Activated CD8-positive, alpha-beta T cell treated with anti-CD3 and anti-CD28 coated beads for 36 hours (primary cell): ENCODE measurements at regions of chr19 and their contacts with region 1.

Region 1: DNA sequence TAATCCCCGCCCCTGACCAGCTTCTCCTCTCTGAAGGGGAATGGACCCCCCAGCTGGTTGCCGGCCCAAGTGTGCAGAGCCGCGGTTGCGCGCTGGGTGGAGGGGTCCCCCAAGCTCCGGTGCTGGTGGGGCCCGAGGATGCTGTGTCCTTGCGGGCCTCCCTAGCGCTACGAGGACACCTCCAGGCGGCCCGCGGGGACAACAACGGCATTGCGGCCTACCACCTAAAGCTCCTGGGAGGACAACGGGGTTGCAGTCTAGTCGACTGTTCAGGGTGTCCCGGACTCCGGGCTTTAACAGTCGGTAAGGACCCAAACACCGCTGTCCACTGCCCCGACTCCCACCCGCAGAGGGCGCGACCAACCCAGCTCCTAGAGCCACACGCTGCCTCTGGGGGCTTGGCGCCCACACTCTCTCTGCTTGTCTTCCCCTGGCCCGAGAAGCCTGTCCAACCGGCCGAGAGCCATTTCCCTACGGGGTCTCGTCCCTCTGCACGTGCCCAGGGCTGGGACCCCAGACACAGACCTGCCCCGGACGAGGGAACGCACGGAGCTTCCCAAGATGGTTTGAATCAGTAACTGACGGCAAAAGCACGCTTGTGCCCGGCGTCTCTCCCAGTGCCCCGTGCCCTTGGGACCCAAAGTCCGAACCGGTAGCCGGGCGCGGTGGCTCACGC is 927 bp upstream of the SDHAF1 start:
- DNase-seq: peak; percentile 36
- ATAC-seq: no peak
- H3K4me3 Mint-ChIP-seq: peak overlapping the region; percentile 96
- H3K27ac Mint-ChIP-seq: peak overlapping the region; percentile 57
- H3K4me1 Mint-ChIP-seq: peaks cover 27% of the 10 kb centered on the region
- H3K27me3 Mint-ChIP-seq: no peaks in the 10 kb centered on the region
- CTCF ChIP-seq: no peak

Region 2: GRCh38 chr19:35775298-35776110 is 218.6 kb before region 1 on chr19 and contains the start of gene ARHGAP33:
- CTCF ChIA-PET with region 1: no interaction called
- POLR2A ChIA-PET with region 1: no interaction called
- intact Hi-C with region 1: no loop called
- DNase-seq: peak; percentile 100
- ATAC-seq: peak; percentile 99
- H3K4me3 Mint-ChIP-seq: peak within 1 kb of the TSS; percentile 72
- H3K27ac Mint-ChIP-seq: peak within 1 kb of the TSS; percentile 59
- H3K4me1 Mint-ChIP-seq: peaks cover 10% of the 10 kb centered on the region
- H3K27me3 Mint-ChIP-seq: no peaks in the 10 kb centered on the region
- CTCF ChIP-seq: no peak
- total RNA-seq, gene ARHGAP33: 27.1 to 29.8 TPM

Region 3: DNA sequence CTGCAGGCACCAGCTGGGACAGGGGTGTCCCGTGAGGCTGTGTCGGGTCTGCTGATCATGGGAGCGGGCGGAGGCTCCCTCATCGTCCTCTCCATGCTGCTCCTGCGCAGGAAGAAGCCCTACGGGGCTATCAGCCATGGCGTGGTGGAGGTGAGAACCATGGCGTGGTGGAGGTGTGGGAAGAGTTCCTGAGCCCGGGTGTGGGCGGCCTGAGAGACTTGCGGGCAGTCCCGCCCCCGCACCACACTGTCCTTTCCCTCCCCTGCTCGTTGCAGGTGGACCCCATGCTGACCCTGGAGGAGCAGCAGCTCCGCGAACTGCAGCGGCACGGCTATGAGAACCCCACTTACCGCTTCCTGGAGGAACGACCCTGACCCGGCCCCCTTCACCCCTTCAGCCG is 115.0 kb before region 1 on chr19:
- CTCF ChIA-PET with region 1: no interaction called
- POLR2A ChIA-PET with region 1: no interaction called
- intact Hi-C with region 1: no loop called
- DNase-seq: no peak
- ATAC-seq: no peak
- H3K4me3 Mint-ChIP-seq: no peak overlapping the region
- H3K27ac Mint-ChIP-seq: no peak overlapping the region
- H3K4me1 Mint-ChIP-seq: peaks cover 5% of the 10 kb centered on the region
- H3K27me3 Mint-ChIP-seq: peaks cover 19% of the 10 kb centered on the region
- CTCF ChIP-seq: no peak

Region 4: GRCh38 chr19:35959040-35959967 is 34.8 kb before region 1 on chr19:
- CTCF ChIA-PET with region 1: interaction called, 6 read pairs
- POLR2A ChIA-PET with region 1: interaction called, 5 read pairs
- intact Hi-C with region 1: loop called (anchors 5 kb)
- DNase-seq: peak; percentile 79
- ATAC-seq: peak; percentile 89
- H3K4me3 Mint-ChIP-seq: peak overlapping the region; percentile 27
- H3K27ac Mint-ChIP-seq: no peak overlapping the region
- H3K4me1 Mint-ChIP-seq: peaks cover 29% of the 10 kb centered on the region
- H3K27me3 Mint-ChIP-seq: peaks cover 4% of the 10 kb centered on the region
- CTCF ChIP-seq: peak; percentile 73

Region 5: DNA sequence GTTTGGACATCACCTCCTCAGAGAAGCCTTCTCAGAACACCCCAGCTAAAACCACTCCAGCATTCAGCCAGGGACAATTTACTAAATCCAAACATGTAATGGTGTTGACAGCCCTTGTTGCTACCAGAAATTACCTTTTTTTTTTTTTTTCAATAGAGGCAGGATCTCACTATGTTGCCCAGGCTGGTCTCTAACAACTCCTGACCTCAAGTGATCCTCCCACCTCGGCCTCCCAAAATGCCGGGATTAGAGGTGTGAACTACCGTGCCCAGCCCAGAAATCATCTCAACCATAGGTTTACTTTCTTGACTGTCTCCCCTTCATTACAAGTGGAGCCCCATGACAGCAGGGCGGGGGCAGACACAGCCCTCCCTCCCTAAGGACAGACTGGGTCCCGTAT is 29.4 kb after region 1 on chr19:
- CTCF ChIA-PET with region 1: no interaction called
- POLR2A ChIA-PET with region 1: no interaction called
- intact Hi-C with region 1: no loop called
- DNase-seq: no peak
- ATAC-seq: no peak
- H3K4me3 Mint-ChIP-seq: no peak overlapping the region
- H3K27ac Mint-ChIP-seq: no peak overlapping the region
- H3K4me1 Mint-ChIP-seq: no peaks in the 10 kb centered on the region
- H3K27me3 Mint-ChIP-seq: no peaks in the 10 kb centered on the region
- CTCF ChIP-seq: no peak

Region 6: DNA sequence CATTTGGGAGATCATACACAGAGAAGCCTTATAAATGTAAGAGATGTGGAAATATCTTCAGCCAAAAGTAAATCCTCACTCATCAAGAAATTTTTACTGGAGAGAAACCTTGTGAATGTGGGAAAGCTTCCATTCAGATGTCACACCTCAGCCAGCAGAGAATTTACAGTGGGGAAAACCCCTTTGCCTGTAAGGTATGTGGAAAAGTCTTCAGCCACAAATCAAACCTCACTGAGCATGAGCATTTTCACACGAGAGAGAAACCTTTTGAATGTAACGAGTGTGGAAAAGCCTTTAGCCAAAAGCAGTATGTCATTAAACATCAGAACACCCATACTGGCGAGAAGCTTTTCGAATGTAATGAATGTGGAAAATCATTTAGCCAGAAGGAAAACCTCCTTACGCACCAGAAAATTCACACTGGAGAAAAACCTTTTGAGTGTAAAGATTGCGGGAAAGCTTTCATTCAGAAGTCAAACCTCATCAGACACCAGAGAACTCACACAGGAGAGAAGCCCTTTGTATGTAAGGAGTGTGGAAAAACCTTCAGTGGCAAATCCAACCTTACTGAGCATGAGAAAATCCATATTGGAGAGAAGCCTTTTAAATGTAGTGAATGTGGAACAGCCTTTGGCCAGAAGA is 242.4 kb after region 1 on chr19:
- CTCF ChIA-PET with region 1: no interaction called
- POLR2A ChIA-PET with region 1: no interaction called
- intact Hi-C with region 1: no loop called
- DNase-seq: no peak
- ATAC-seq: no peak
- H3K4me3 Mint-ChIP-seq: no peak overlapping the region
- H3K27ac Mint-ChIP-seq: no peak overlapping the region
- H3K4me1 Mint-ChIP-seq: no peaks in the 10 kb centered on the region
- H3K27me3 Mint-ChIP-seq: no peaks in the 10 kb centered on the region
- CTCF ChIP-seq: no peak